Right cardiac atrium (tissue), 5 donors: ENCODE measurements at regions of chr18 and their contacts with region 1.

Region 1: DNA sequence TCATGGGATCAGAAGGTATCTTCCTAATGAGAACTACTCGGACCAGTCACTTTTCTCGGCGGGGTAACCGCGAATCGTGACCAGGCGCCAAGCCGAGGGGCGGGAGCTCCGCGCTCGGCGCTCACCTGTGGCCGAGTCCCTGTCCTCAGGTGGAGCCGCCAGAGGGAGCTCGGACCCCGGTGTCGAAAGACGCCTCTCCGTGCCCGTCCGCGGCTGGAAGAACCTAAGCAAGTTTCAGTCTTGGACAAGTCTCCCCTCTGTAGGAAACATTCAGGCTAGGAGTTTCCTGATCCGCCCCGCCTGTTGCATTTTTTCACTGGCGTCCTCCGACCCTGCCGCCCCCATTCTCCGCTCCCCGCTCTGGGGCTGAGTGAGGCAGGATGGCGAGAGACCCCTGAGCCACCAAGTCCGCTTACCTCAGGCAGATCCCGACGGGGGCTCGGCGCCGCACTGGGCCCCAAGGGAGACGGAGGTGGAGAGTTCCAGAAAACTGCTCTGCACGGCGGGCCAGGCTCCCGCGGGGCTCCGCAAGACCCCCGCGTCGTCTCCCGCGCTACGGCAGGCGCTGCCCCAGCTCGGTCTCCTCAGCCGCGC is 478 bp downstream of the DSEL start:
- DNase-seq: peak; percentile 81 to 94 (median 92)
- ATAC-seq: peak; percentile 77 to 80
- H3K4me3 ChIP-seq: peak overlapping the region; percentile 93
- H3K27ac ChIP-seq: peak overlapping the region; percentile 77
- H3K4me1 ChIP-seq: no peaks in the 10 kb centered on the region
- H3K27me3 ChIP-seq: no peaks in the 10 kb centered on the region

Region 2: DNA sequence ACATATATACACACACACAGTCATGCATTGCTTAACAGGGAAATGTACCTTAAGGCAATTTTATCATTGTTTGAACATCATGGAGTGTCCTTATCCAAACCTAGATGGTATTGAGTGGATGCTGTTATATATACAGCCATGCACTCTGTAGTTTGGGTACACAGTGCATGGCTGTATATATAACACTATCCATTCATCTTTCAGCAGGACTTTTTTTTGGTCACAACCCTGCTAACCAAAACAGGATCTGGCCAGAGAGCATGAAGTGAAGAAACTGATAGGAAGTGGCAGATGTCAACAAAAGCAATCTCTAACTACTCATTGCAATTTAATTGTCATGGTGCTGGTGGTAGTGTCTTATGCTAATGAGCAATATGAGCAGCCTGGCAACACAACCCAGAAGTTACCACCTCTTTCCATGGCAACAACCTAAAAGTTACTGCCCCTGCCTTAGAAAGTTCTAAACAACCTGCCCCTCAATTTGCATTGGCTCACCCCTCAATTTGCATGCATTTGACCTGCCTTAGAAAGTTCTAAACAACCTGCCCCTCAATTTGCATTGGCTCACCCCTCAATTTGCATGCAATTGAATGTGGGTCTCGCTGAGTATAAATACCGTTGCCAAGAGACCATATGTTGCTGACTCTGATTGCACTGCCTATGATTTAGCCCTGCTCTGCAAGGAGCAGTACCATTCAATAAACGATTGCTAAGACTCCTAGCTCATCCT is 434.4 kb before region 1 on chr18:
- intact Hi-C with region 1: no loop called
- DNase-seq: no peak
- ATAC-seq: no peak
- H3K4me3 ChIP-seq: no peak overlapping the region
- H3K27ac ChIP-seq: no peak overlapping the region
- H3K4me1 ChIP-seq: no peaks in the 10 kb centered on the region
- H3K27me3 ChIP-seq: no peaks in the 10 kb centered on the region

Region 3: DNA sequence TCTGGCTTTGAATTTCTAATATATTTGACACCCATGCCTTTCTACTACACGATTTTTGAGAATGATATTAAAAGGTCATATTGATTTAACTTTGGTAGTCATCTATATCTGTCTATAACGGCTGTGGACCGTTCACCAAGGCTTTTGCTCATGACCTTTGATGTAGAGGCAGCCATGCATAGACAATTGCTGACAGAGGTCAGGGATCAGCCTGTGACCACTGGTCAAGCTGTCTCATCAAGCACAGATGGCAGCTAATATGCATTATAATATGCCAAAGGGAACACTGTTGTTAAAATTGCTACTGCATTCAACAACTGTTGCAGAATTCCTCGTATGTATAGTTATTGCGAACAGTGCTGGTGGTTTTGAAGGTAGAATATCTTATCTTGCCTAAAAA is 324.3 kb after region 1 on chr18:
- intact Hi-C with region 1: loop called in 1 of 4 experiments (anchors 5 kb)
- DNase-seq: no peak
- ATAC-seq: no peak
- H3K4me3 ChIP-seq: no peak overlapping the region
- H3K27ac ChIP-seq: no peak overlapping the region
- H3K4me1 ChIP-seq: no peaks in the 10 kb centered on the region
- H3K27me3 ChIP-seq: no peaks in the 10 kb centered on the region